ENCODE measurements at regions of chr3 and their contacts with region 1.

Region 1: DNA sequence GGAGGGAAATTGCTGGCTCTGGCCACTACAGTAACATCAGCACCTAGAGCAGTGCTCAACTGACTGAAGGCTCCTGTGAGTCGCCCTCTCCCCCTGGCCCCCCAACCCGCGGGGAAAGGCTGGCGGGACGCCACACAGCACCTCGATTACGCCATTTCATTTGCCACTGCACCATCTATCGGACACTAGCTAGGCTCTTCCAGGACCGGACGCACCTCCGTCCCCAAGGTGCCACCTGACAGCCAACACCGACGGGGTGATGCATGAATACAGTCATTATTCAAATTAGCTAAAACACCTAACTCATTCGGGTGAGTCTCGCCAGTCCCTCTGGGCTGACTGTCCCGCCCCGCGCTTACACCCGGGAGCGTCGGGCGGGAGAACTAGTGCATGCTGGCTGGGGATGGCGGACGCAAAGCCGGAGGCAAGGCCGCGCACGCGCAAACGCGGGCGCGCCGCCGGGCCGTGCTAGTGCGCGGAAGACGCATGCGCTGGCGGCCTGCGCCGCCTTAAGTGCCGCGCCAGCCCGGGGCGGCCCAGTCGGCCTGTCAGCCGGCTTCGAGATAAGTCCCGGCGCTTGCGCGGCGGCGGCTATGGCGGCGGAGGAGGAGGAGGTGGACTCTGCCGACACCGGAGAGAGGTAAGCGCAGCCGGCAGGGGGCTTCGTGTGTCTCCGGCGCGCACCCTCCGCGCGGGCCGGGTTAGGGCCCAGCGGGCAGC is at the start of gene ABHD5:
- DNase-seq: peak; percentile 92
- H3K4me3 ChIP-seq: peak within 1 kb of the TSS; percentile 65 to 95 (median 76)
- H3K27ac ChIP-seq: peak within 1 kb of the TSS; percentile 93 to 98 (median 96)
- H3K4me1 ChIP-seq: peaks cover 5 to 32% (median 13%) of the 10 kb centered on the region in 4 donors
- H3K27me3 ChIP-seq: no peaks in the 10 kb centered on the region
- CTCF ChIP-seq: peak in 2 of 5 experiments; percentile 24 to 27
- EP300 ChIP-seq: no peak
- POLR2A ChIP-seq: peak; percentile 100
- total RNA-seq, gene ABHD5: 36.2 to 304 (median 48.0) TPM

Region 2: GRCh38 chr3:43621656-43622432 is 68.7 kb before region 1 on chr3 and contains the start of gene ANO10:
- in situ Hi-C with region 1: no loop called
- intact Hi-C with region 1: loop called (anchors 5 kb)
- DNase-seq: peak; percentile 99
- H3K4me3 ChIP-seq: peak within 1 kb of the TSS; percentile 77 to 93 (median 90)
- H3K27ac ChIP-seq: peak within 1 kb of the TSS; percentile 87 to 93 (median 90)
- H3K4me1 ChIP-seq: peaks cover 0 to 33% (median 7%) of the 10 kb centered on the region in 4 donors
- H3K27me3 ChIP-seq: no peaks in the 10 kb centered on the region
- CTCF ChIP-seq: no peak
- EP300 ChIP-seq: no peak
- POLR2A ChIP-seq: peak; percentile 70
- total RNA-seq, gene ANO10: 20.9 to 70.5 (median 48.0) TPM

Region 3: GRCh38 chr3:43676441-43676840 is 14.1 kb before region 1 on chr3:
- in situ Hi-C with region 1: no loop called
- intact Hi-C with region 1: no loop called
- DNase-seq: no peak
- H3K4me3 ChIP-seq: no peak overlapping the region
- H3K27ac ChIP-seq: no peak overlapping the region
- H3K4me1 ChIP-seq: no peaks in the 10 kb centered on the region
- H3K27me3 ChIP-seq: no peaks in the 10 kb centered on the region
- CTCF ChIP-seq: no peak
- EP300 ChIP-seq: no peak
- POLR2A ChIP-seq: no peak

Measured in transverse colon (tissue), 4 donors.